ENCODE measurements at regions of chr6 and their contacts with region 1.

Region 1: DNA sequence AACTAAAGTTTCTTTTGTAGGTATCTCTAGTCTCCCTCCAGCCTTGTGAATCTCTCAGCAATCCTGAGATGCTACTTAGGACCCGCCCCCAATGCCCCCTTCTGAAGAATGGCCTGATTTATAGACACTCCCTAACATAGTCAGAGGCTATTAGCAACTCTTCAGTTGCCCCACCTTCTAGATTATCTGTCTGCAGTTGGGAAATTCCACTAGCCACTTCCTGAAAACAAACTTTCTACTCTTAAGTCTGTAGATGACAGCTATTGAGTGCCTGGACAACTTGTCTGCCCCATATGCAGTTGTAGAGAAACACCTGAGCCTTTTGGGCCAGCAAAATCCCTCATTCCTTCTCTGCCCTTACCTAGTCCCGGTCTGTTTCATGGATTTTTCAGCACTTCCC is 188.2 kb upstream of the PREP start:
- DNase-seq: peak in 1 of 2 experiments; percentile 43
- H3K4me3 ChIP-seq: no peak overlapping the region
- H3K27ac ChIP-seq: no peak overlapping the region
- H3K4me1 ChIP-seq: peaks cover 22% of the 10 kb centered on the region
- H3K27me3 ChIP-seq: no peaks in the 10 kb centered on the region
- CTCF ChIP-seq: no peak

Region 2: DNA sequence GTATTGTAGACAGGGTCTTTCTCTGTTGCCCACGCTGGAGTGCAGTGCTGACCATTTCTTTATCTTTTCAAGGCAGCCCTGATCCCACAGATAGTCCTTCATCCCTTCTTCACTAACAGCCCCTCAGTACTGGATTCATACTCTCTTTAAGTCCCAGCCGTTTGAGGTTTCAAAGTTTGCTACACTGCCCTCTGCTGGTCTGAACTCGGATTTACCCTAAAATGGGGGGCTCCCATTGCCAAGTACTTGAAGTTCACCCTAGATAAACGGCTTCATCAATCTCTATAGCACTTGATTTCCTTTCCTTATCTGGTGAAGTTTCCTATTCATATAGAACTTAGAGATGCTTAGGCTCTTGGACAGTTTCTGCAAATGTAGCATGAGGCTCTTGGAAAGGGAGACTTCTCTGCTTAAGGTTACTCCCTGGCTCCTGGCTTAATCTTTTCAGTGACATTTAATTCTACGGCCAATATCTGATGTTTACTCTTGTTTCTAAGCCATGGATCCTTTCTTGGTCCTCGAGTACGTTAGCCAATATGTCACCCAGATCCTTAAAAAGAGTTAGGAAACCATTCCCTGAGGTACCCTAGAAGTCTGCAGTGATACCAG is 166.8 kb before region 1 on chr6:
- CTCF ChIA-PET with region 1: no interaction called
- POLR2A ChIA-PET with region 1: no interaction called
- intact Hi-C with region 1: no loop called
- DNase-seq: peak; percentile 43 to 57
- H3K4me3 ChIP-seq: no peak overlapping the region
- H3K27ac ChIP-seq: no peak overlapping the region
- H3K4me1 ChIP-seq: peaks cover 21% of the 10 kb centered on the region
- H3K27me3 ChIP-seq: no peaks in the 10 kb centered on the region
- CTCF ChIP-seq: peak; percentile 87

Region 3: GRCh38 chr6:106309766-106310373 is 718.8 kb after region 1 on chr6:
- CTCF ChIA-PET with region 1: no interaction called
- POLR2A ChIA-PET with region 1: no interaction called
- intact Hi-C with region 1: loop called (anchors 10 kb)
- DNase-seq: peak in 1 of 2 experiments; percentile 73
- H3K4me3 ChIP-seq: no peak overlapping the region
- H3K27ac ChIP-seq: peak overlapping the region; percentile 28
- H3K4me1 ChIP-seq: peaks cover 31% of the 10 kb centered on the region
- H3K27me3 ChIP-seq: no peaks in the 10 kb centered on the region
- CTCF ChIP-seq: no peak

Measured in PC-9 (cell line).